Endothelial cell of umbilical vein (primary cell): ENCODE measurements at regions of chr3 and their contacts with region 1.

Region 1: GRCh38 chr3:138417559-138417982 is 16.8 kb upstream of the ESYT3 start:
- DNase-seq: peak; percentile 64
- H3K4me3 ChIP-seq: no peak overlapping the region
- H3K27ac ChIP-seq: no peak overlapping the region
- H3K4me1 ChIP-seq: no peaks in the 10 kb centered on the region
- H3K27me3 ChIP-seq: peaks cover 0 to 5% of the 10 kb centered on the region in 2 experiments
- CTCF ChIP-seq: peak; percentile 89 to 92
- POLR2A ChIP-seq: no peak

Region 2: DNA sequence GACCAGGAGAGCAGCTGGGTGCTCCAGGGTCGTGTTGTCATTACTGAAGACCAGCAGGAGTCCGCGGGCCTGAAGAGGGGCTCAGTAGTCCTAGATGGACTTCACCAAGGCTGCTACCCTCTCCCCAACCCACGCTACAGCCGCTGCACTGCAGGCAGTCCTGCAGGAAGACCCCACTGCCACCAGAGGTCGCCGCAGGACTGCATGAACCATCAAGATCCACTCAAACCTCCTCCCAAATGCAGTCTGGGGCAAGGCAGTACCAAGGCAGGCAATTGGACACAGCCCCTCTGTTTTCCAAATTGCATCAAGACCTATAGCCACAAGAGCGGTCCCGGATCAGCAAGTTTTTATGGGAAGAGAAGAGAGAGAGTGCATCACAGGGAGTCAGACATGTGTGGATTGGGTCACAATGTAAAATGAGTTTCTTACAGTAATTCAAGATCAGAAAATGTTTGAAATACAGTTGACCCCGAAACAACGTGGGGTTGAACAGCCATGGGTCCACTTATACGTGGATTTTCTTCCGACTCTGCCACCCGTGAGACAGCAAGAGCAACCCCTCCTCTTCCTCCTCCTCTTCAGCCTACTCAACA is 348.9 kb before region 1 on chr3:
- CTCF ChIA-PET with region 1: no interaction called
- POLR2A ChIA-PET with region 1: no interaction called
- dilution Hi-C with region 1: no loop called
- intact Hi-C with region 1: loop called (anchors 5 kb)
- DNase-seq: peak; percentile 62
- H3K4me3 ChIP-seq: no peak overlapping the region
- H3K27ac ChIP-seq: no peak overlapping the region
- H3K4me1 ChIP-seq: no peaks in the 10 kb centered on the region
- H3K27me3 ChIP-seq: no peaks in the 10 kb centered on the region
- CTCF ChIP-seq: peak; percentile 95 to 98
- POLR2A ChIP-seq: no peak

Region 3: GRCh38 chr3:138329127-138329983 is 88.2 kb before region 1 on chr3 and contains the start of gene NME9:
- CTCF ChIA-PET with region 1: interaction called, 5 read pairs
- POLR2A ChIA-PET with region 1: no interaction called
- dilution Hi-C with region 1: no loop called
- intact Hi-C with region 1: loop called (anchors 5 kb)
- DNase-seq: peak; percentile 88
- H3K4me3 ChIP-seq: peak within 1 kb of the TSS; percentile 32 to 53 (median 52)
- H3K27ac ChIP-seq: no peak within 1 kb of the TSS
- H3K4me1 ChIP-seq: peaks cover 20% of the 10 kb centered on the region
- H3K27me3 ChIP-seq: peaks cover 2 to 3% of the 10 kb centered on the region in 2 experiments
- CTCF ChIP-seq: peak; percentile 54 to 69
- POLR2A ChIP-seq: no peak
- total RNA-seq, gene NME9: not detected in 2 replicates

Region 4: DNA sequence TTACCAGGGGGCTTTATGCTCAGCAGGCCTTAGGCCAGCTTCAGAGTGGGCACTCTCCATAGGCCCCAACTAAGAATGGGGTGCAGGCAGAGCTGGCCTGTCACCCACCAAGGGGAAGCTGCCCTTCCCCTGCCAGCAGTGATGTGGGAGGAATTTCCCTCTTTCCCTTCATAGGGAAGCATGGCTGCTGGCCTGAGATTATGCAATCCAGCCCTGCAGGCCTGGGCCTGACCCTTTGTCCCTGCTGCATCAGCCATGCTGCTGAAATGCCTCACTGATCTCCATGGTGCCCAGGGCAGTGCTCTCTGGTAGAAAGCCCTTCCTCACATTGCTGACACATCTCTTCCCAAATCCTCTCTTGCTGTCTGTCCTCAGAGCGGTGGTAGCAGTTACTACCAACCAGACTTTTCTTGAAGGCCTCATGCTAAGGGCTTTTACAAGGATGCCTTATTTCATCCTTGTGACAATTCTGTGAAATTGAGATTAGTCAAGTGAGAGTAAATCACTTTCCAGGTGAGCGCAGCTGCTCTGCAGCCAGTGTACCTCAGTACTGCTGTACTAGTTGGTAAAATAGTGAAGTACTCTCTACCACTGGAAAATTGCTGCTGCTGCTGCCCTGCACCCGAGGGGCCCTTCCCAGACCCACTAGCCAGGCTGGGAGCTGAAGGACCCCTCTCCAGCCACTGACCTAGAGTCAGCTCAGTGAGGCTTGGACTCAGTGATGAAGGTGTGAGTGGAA is 35.5 kb before region 1 on chr3:
- CTCF ChIA-PET with region 1: no interaction called
- POLR2A ChIA-PET with region 1: no interaction called
- dilution Hi-C with region 1: no loop called
- intact Hi-C with region 1: no loop called
- DNase-seq: no peak
- H3K4me3 ChIP-seq: no peak overlapping the region
- H3K27ac ChIP-seq: no peak overlapping the region
- H3K4me1 ChIP-seq: no peaks in the 10 kb centered on the region
- H3K27me3 ChIP-seq: no peaks in the 10 kb centered on the region
- CTCF ChIP-seq: no peak
- POLR2A ChIP-seq: no peak

Region 5: GRCh38 chr3:138935848-138936740 is 518.5 kb after region 1 on chr3:
- CTCF ChIA-PET with region 1: interaction called, 11 read pairs
- POLR2A ChIA-PET with region 1: no interaction called
- dilution Hi-C with region 1: no loop called
- intact Hi-C with region 1: no loop called
- DNase-seq: peak; percentile 59
- H3K4me3 ChIP-seq: peak overlapping the region in 2 of 3 experiments; percentile 0 to 25
- H3K27ac ChIP-seq: no peak overlapping the region
- H3K4me1 ChIP-seq: peaks cover 7% of the 10 kb centered on the region
- H3K27me3 ChIP-seq: peaks cover 54 to 66% of the 10 kb centered on the region in 2 experiments
- CTCF ChIP-seq: peak; percentile 84 to 94
- POLR2A ChIP-seq: no peak

Region 6: GRCh38 chr3:139329345-139329850 is 911.8 kb after region 1 on chr3:
- CTCF ChIA-PET with region 1: interaction called, 17 read pairs
- POLR2A ChIA-PET with region 1: no interaction called
- dilution Hi-C with region 1: no loop called
- intact Hi-C with region 1: loop called (anchors 1 kb)
- DNase-seq: peak; percentile 74
- H3K4me3 ChIP-seq: no peak overlapping the region
- H3K27ac ChIP-seq: no peak overlapping the region
- H3K4me1 ChIP-seq: peaks cover 3% of the 10 kb centered on the region
- H3K27me3 ChIP-seq: peaks cover 2 to 15% of the 10 kb centered on the region in 2 experiments
- CTCF ChIP-seq: peak; percentile 99
- POLR2A ChIP-seq: no peak